Sciatic nerve (tissue), 2 donors: ENCODE measurements at regions of chr4 and their contacts with region 1.

Region 1: GRCh38 chr4:99447079-99447478 is 11.9 kb upstream of the ADH7 start:
- DNase-seq: no peak
- ATAC-seq: no peak

Region 2: GRCh38 chr4:98467627-98468072 is 979.4 kb before region 1 on chr4:
- intact Hi-C with region 1: loop called (anchors 5 kb)
- DNase-seq: peak; percentile 82
- ATAC-seq: peak; percentile 93

Region 3: GRCh38 chr4:99483636-99484035 is 36.6 kb after region 1 on chr4:
- intact Hi-C with region 1: no loop called
- DNase-seq: no peak
- ATAC-seq: no peak